AG04449 (cell line): ENCODE measurements at regions of chr4 and their contacts with region 1.

Region 1: GRCh38 chr4:94732358-94732698 is 25.4 kb upstream of the BMPR1B start:
- DNase-seq: no peak
- H3K4me3 ChIP-seq: no peak overlapping the region
- CTCF ChIP-seq: no peak

Region 2: DNA sequence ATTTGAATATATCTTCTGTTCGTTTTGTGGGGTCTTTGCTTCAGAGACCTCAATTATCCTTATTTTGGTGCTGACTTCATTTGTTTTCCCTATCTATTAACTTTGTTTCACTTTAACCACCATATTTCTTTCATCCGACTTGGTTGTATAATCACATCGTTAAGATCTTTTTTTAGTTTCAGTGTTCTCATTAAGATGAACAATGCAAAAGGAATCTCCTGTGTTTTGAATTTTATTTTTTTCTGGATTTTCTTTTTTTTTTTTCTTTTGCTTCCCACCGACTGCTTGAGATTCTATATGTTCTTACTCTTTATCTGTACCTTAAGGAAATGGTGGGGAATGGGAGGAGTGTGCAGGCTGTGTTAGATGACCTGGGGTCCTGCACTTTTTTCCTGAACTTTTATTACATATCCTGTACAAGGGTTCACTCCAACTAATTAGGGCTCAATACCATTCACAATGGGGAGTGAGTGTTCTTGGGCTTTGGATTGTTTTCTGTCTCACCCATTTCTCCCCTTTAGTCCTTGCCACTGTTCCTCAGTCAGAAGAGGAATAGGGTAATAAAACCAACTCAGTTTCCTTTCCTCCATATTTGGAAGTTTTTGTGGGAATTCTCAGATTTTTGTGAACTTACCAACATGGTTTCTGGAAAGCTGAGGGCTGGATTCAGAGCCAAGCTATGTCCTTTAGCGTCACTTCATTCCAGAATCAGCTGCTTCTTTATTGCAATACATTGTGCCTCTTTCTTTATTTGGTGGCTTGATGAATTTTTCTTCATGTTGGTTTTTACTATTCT is 17.8 kb before region 1 on chr4:
- CTCF ChIA-PET with region 1: interaction called, 11 read pairs
- POLR2A ChIA-PET with region 1: no interaction called
- DNase-seq: peak; percentile 83
- H3K4me3 ChIP-seq: no peak overlapping the region
- CTCF ChIP-seq: no peak